IMR-90 (cell line): ENCODE measurements at regions of chr13 and their contacts with region 1.

Region 1: DNA sequence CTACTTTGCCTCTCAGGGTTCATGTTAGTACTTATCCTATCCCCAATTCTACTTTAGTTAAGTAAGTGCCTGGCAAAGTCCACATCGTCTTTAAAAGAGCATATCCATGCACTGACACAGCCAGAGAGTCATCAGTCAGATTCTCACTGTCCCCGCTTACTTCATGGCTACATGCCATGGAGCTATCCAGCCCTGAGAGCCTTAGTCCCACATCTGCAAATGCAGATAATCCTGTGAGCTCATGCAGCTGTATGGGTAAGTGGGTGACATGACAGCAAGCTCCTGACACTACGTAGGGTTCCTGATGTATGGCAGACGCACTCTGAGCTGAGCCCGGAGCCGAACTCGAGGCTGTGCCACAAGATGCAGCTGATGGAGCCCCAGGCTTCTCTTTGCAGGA is 661.5 kb downstream of the LIG4 start:
- DNase-seq: peak; percentile 69
- ATAC-seq: peak; percentile 77
- H3K4me3 ChIP-seq: no peak overlapping the region
- H3K27ac ChIP-seq: no peak overlapping the region
- H3K4me1 ChIP-seq: no peaks in the 10 kb centered on the region
- H3K27me3 ChIP-seq: no peaks in the 10 kb centered on the region
- CTCF ChIP-seq: no peak
- POLR2A ChIP-seq: no peak
- RAD21 ChIP-seq: no peak

Region 2: DNA sequence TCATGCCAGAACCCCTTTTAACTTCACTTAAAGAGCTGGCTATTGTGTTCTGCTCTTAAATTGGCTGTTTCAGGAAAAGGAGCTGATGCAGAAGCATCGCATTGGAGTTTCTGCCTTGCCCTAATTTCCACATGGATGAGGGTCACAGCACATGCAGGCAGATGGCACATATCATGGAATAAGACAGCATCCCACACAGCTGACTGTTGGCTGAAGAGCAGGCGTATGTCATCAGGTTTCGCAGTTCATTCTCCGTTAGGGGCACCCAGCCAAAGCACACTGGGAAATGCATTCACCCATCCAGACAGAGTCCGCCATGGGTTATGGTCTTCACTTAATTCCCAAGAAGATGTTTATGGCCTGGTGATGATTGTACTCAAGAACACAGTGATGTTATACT is 89.0 kb after region 1 on chr13:
- CTCF ChIA-PET with region 1: no interaction called
- POLR2A ChIA-PET with region 1: no interaction called
- dilution Hi-C with region 1: no loop called
- in situ Hi-C with region 1: no loop called
- intact Hi-C with region 1: loop called (anchors 10 kb)
- DNase-seq: peak; percentile 55
- ATAC-seq: peak; percentile 64
- H3K4me3 ChIP-seq: no peak overlapping the region
- H3K27ac ChIP-seq: no peak overlapping the region
- H3K4me1 ChIP-seq: peaks cover 5% of the 10 kb centered on the region
- H3K27me3 ChIP-seq: no peaks in the 10 kb centered on the region
- CTCF ChIP-seq: no peak
- POLR2A ChIP-seq: no peak
- RAD21 ChIP-seq: no peak